ENCODE measurements at regions of chr5 and their contacts with region 1.

Region 1: DNA sequence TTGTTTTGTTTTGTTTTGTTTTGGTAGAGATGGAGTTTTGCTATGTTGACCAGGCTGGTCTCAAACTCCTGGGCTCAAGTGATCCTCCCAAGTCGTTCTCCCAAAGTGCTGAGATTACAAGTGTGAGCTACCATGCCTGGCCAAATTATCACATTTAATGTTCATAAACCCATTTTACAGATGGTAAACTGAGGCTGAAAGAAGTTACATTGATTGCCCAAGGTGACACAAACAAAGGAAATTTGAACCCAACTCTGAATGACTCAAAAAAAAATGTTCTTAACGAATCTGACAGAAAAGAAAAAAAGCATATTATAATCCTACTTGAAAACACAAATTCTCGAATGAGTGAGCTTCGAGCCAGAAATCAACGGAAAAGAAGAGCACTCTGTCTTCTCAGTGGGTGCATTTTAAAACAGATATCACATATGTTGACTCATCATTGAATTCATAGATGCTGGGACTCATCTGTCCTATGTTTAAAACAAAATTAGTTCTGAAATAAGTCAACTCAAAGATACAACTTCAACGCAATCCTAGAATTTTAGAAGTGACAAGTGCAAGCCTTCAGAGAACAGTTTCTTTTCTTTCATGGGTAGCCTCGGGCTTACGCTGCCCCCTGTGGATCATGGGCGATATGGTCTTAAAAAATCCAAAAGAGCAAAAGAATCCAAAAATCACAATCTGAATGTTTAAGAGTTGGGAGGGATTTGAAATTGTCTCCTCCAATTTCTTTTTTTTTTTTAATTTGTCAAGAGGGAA is 28.4 kb downstream of the TIMD4 start:
- DNase-seq: peak; percentile 23 to 77 (median 57)
- ATAC-seq: peak; percentile 57
- H3K4me3 ChIP-seq: no peak overlapping the region
- H3K4me3 Mint-ChIP-seq: peak overlapping the region; percentile 65
- H3K27ac ChIP-seq: no peak overlapping the region
- H3K27ac Mint-ChIP-seq: no peak overlapping the region
- H3K4me1 ChIP-seq: peaks cover 32% of the 10 kb centered on the region
- H3K4me1 Mint-ChIP-seq: peaks cover 44% of the 10 kb centered on the region
- H3K27me3 ChIP-seq: no peaks in the 10 kb centered on the region
- H3K27me3 Mint-ChIP-seq: no peaks in the 10 kb centered on the region
- CTCF ChIP-seq: peak; percentile 88

Region 2: GRCh38 chr5:154940772-154941620 is 1993.6 kb before region 1 on chr5 and contains the start of gene MRPL22:
- CTCF ChIA-PET with region 1: no interaction called
- POLR2A ChIA-PET with region 1: no interaction called
- intact Hi-C with region 1: loop called in 1 of 2 experiments (anchors 5 kb)
- DNase-seq: peak; percentile 89 to 97 (median 95)
- ATAC-seq: peak; percentile 70
- H3K4me3 ChIP-seq: peak within 1 kb of the TSS; percentile 82 to 92
- H3K4me3 Mint-ChIP-seq: peak within 1 kb of the TSS; percentile 100
- H3K27ac ChIP-seq: peak within 1 kb of the TSS; percentile 73 to 80
- H3K27ac Mint-ChIP-seq: peak within 1 kb of the TSS; percentile 98
- H3K4me1 ChIP-seq: peaks cover 36% of the 10 kb centered on the region
- H3K4me1 Mint-ChIP-seq: peaks cover 53% of the 10 kb centered on the region
- H3K27me3 ChIP-seq: no peaks in the 10 kb centered on the region
- H3K27me3 Mint-ChIP-seq: no peaks in the 10 kb centered on the region
- CTCF ChIP-seq: no peak
- total RNA-seq, gene MRPL22: 42.2 TPM

Region 3: GRCh38 chr5:155616779-155617392 is 1317.7 kb before region 1 on chr5:
- CTCF ChIA-PET with region 1: no interaction called
- POLR2A ChIA-PET with region 1: no interaction called
- intact Hi-C with region 1: loop called in 1 of 2 experiments (anchors 2 kb)
- DNase-seq: peak; percentile 4 to 61 (median 41)
- ATAC-seq: no peak
- H3K4me3 ChIP-seq: no peak overlapping the region
- H3K4me3 Mint-ChIP-seq: no peak overlapping the region
- H3K27ac ChIP-seq: no peak overlapping the region
- H3K27ac Mint-ChIP-seq: no peak overlapping the region
- H3K4me1 ChIP-seq: no peaks in the 10 kb centered on the region
- H3K4me1 Mint-ChIP-seq: no peaks in the 10 kb centered on the region
- H3K27me3 ChIP-seq: no peaks in the 10 kb centered on the region
- H3K27me3 Mint-ChIP-seq: peaks cover 19% of the 10 kb centered on the region
- CTCF ChIP-seq: peak; percentile 32

Region 4: GRCh38 chr5:156460471-156460870 is 474.2 kb before region 1 on chr5:
- CTCF ChIA-PET with region 1: no interaction called
- POLR2A ChIA-PET with region 1: no interaction called
- intact Hi-C with region 1: loop called in 1 of 2 experiments (anchors 10 kb)
- DNase-seq: no peak
- ATAC-seq: no peak
- H3K4me3 ChIP-seq: no peak overlapping the region
- H3K4me3 Mint-ChIP-seq: no peak overlapping the region
- H3K27ac ChIP-seq: no peak overlapping the region
- H3K27ac Mint-ChIP-seq: no peak overlapping the region
- H3K4me1 ChIP-seq: no peaks in the 10 kb centered on the region
- H3K4me1 Mint-ChIP-seq: no peaks in the 10 kb centered on the region
- H3K27me3 ChIP-seq: no peaks in the 10 kb centered on the region
- H3K27me3 Mint-ChIP-seq: peaks cover 13% of the 10 kb centered on the region
- CTCF ChIP-seq: no peak

Region 5: GRCh38 chr5:156836846-156837245 is 97.8 kb before region 1 on chr5:
- CTCF ChIA-PET with region 1: interaction called, 3 read pairs
- POLR2A ChIA-PET with region 1: no interaction called
- intact Hi-C with region 1: loop called in 1 of 2 experiments (anchors 1 kb)
- DNase-seq: no peak
- ATAC-seq: no peak
- H3K4me3 ChIP-seq: no peak overlapping the region
- H3K4me3 Mint-ChIP-seq: no peak overlapping the region
- H3K27ac ChIP-seq: no peak overlapping the region
- H3K27ac Mint-ChIP-seq: no peak overlapping the region
- H3K4me1 ChIP-seq: no peaks in the 10 kb centered on the region
- H3K4me1 Mint-ChIP-seq: no peaks in the 10 kb centered on the region
- H3K27me3 ChIP-seq: no peaks in the 10 kb centered on the region
- H3K27me3 Mint-ChIP-seq: no peaks in the 10 kb centered on the region
- CTCF ChIP-seq: no peak

Region 6: GRCh38 chr5:156913719-156914370 is 20.8 kb before region 1 on chr5:
- CTCF ChIA-PET with region 1: interaction called, 18 read pairs
- POLR2A ChIA-PET with region 1: interaction called, 4 read pairs
- intact Hi-C with region 1: loop called in 1 of 2 experiments (anchors 2 kb)
- DNase-seq: peak in 8 of 9 experiments; percentile 8 to 73 (median 34)
- ATAC-seq: peak; percentile 82
- H3K4me3 ChIP-seq: peak overlapping the region; percentile 27 to 34
- H3K4me3 Mint-ChIP-seq: peak overlapping the region; percentile 82
- H3K27ac ChIP-seq: peak overlapping the region; percentile 8 to 73
- H3K27ac Mint-ChIP-seq: peak overlapping the region; percentile 97
- H3K4me1 ChIP-seq: peaks cover 32% of the 10 kb centered on the region
- H3K4me1 Mint-ChIP-seq: peaks cover 59% of the 10 kb centered on the region
- H3K27me3 ChIP-seq: no peaks in the 10 kb centered on the region
- H3K27me3 Mint-ChIP-seq: no peaks in the 10 kb centered on the region
- CTCF ChIP-seq: no peak

Region 7: DNA sequence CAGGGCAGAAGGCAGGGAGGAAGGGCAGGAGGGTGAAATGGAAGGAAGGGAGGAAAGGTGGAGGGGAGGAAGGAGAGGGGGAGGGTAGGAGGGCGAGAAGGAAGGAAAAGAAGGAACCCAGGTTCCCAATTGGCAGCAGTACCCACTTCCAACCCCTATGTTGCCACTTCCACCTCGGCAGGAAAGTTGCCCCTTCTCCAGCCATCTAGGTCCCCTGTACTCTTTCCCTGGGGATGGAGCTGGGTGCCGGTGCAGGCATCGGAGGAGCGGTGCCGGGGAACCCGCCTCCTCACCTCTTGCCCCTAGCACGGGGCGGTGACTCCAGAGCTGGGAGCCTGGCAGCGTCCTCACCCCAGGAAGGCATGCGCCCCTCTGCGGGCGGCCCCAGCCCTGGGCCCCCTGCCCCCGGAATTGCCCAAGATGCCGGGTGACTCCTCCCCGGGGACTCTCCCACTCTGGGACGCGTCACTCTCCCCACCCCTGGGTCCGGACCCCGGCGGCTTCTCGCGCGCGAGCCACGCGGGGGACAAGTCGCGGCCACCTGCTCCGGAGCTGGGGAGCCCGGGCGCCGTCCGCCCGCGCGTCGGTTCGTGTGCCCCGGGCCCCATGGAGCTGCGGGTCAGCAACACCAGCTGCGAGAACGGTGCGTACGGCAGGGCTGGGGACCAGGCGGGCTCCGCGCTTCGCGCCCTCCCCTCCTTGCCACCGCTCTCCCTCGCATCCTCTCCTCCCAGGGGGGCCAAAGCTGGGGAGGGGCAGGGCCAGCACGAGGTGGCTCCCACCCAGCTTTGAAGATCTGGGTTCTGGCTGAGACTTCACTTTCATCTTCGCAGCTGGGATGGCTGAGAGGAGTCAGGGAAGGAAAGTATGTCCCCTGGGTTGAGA is 525.3 kb after region 1 on chr5 and contains the start of gene NIPAL4:
- CTCF ChIA-PET with region 1: no interaction called
- POLR2A ChIA-PET with region 1: no interaction called
- intact Hi-C with region 1: no loop called
- DNase-seq: peak in 2 of 9 experiments; percentile 33 to 35
- ATAC-seq: peak; percentile 46
- H3K4me3 ChIP-seq: peak within 1 kb of the TSS; percentile 11 to 31
- H3K4me3 Mint-ChIP-seq: peak within 1 kb of the TSS; percentile 62
- H3K27ac ChIP-seq: no peak within 1 kb of the TSS
- H3K27ac Mint-ChIP-seq: no peak within 1 kb of the TSS
- H3K4me1 ChIP-seq: no peaks in the 10 kb centered on the region
- H3K4me1 Mint-ChIP-seq: peaks cover 10% of the 10 kb centered on the region
- H3K27me3 ChIP-seq: peaks cover 0 to 6% of the 10 kb centered on the region in 2 experiments
- H3K27me3 Mint-ChIP-seq: peaks cover 24% of the 10 kb centered on the region
- CTCF ChIP-seq: no peak
- total RNA-seq, gene NIPAL4: 0.25 to 0.41 TPM